K562 (cell line): ENCODE measurements at regions of chr7 and their contacts with region 1.

Region 1: GRCh38 chr7:134632937-134633540 is 13.6 kb upstream of the BPGM start:
- DNase-seq: peak; percentile 54 to 79 (median 68)
- ATAC-seq: peak; percentile 94
- H3K4me3 ChIP-seq: no peak overlapping the region
- H3K27ac ChIP-seq: no peak overlapping the region
- H3K4me1 ChIP-seq: peaks cover 0 to 6% of the 10 kb centered on the region in 2 experiments; a peak in 2 of 5 replicates
- H3K27me3 ChIP-seq: peaks cover 0 to 5% of the 10 kb centered on the region in 2 experiments; a peak in 1 of 5 replicates
- CTCF ChIP-seq: peak; percentile 84 to 97 (median 88)
- EP300 ChIP-seq: no peak
- POLR2A ChIP-seq: no peak
- RAD21 ChIP-seq: peak; percentile 95 to 98

Region 2: DNA sequence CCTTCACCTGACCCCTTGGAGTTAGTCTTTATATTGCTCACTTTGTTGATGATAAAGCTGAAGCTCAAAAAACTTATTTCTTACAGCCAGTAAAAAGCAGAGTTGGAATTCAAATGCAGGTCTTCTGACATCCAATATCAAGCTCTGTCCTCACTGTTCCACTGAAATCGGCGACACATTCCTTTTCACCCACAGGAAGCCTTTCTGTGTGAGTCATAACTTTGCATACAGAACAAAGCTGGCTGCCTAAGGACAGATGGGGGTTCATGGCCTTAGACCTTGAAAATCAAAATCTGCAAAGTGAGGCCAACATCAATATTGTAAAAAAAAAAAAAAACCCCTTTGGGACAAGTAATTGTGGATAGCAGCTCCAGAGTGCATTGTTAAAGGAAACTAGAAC is 152.3 kb before region 1 on chr7:
- CTCF ChIA-PET with region 1: no interaction called
- POLR2A ChIA-PET with region 1: no interaction called
- in situ Hi-C with region 1: no loop called
- intact Hi-C with region 1: no loop called
- DNase-seq: no peak
- ATAC-seq: no peak
- H3K4me3 ChIP-seq: no peak overlapping the region
- H3K27ac ChIP-seq: no peak overlapping the region
- H3K4me1 ChIP-seq: no peaks in the 10 kb centered on the region
- H3K27me3 ChIP-seq: no peaks in the 10 kb centered on the region
- CTCF ChIP-seq: no peak
- EP300 ChIP-seq: no peak
- POLR2A ChIP-seq: no peak
- RAD21 ChIP-seq: no peak

Region 3: DNA sequence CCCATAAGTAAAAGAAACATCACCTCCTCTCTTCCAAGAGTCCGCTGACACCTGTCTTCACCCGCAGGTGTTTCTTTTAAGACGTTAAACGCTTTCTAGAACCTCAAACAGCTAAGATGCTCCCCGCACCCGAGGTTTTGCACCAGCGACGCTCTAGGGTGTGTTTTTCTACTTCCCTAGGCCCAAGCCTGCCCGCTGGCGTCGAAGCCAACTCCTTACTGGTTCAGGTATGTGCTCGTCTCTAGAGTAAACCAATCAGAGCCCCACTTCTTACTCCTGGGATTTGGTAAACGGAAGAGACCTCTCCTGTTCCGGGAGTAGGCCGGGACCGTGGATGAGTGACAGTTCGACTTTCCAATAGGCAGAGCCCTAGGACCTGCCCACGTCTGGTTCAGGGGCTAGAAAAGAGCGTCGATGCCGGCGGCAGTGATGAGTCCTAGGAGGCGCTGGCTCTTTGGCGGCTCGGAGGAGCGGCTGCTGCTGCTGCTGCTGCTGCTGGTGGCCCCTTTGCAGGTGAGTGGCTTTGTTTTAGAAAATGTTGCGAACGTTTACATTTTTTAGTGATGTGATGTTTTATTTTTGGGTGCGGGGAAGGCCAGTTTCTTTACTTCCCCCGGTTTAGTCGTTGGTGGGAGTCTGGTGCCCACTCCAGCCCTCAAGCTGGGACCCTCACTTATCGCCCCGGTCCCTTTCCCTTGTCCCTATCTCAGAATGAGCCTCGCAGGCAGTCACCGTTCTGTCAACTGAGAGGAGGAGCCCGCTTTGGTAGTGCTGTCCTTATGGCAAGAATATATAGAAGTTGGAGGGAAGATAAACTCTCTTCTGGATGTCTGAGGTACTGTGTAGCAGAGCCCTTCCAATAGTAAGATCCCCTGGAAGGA is 13.6 kb after region 1 on chr7 and contains the start of gene BPGM:
- CTCF ChIA-PET with region 1: no interaction called
- POLR2A ChIA-PET with region 1: interaction called, 30 read pairs
- in situ Hi-C with region 1: no loop called
- intact Hi-C with region 1: no loop called
- DNase-seq: peak; percentile 99 to 100 (median 100)
- ATAC-seq: peak; percentile 99
- H3K4me3 ChIP-seq: peak within 1 kb of the TSS; percentile 62
- H3K27ac ChIP-seq: peak within 1 kb of the TSS; percentile 58
- H3K4me1 ChIP-seq: peaks cover 0 to 4% of the 10 kb centered on the region in 2 experiments; a peak in 2 of 5 replicates
- H3K27me3 ChIP-seq: no peaks in the 10 kb centered on the region
- CTCF ChIP-seq: peak; percentile 63 to 71 (median 66)
- EP300 ChIP-seq: no peak; the same call in none of the 2 replicates
- POLR2A ChIP-seq: peak; percentile 97
- RAD21 ChIP-seq: no peak
- polyA plus RNA-seq, gene BPGM: 33.0 to 46.1 TPM

Region 4: GRCh38 chr7:134701272-134701671 is 68.2 kb after region 1 on chr7:
- CTCF ChIA-PET with region 1: interaction called, 17 read pairs
- POLR2A ChIA-PET with region 1: no interaction called
- in situ Hi-C with region 1: no loop called
- intact Hi-C with region 1: loop called (anchors 1 kb)
- DNase-seq: peak; percentile 46 to 72 (median 60)
- ATAC-seq: peak; percentile 89
- H3K4me3 ChIP-seq: no peak overlapping the region
- H3K27ac ChIP-seq: no peak overlapping the region
- H3K4me1 ChIP-seq: no peaks in the 10 kb centered on the region
- H3K27me3 ChIP-seq: peaks cover 59 to 63% of the 10 kb centered on the region in 2 experiments
- CTCF ChIP-seq: peak; percentile 66 to 85 (median 79)
- EP300 ChIP-seq: no peak
- POLR2A ChIP-seq: no peak
- RAD21 ChIP-seq: peak; percentile 51 to 83

Region 5: DNA sequence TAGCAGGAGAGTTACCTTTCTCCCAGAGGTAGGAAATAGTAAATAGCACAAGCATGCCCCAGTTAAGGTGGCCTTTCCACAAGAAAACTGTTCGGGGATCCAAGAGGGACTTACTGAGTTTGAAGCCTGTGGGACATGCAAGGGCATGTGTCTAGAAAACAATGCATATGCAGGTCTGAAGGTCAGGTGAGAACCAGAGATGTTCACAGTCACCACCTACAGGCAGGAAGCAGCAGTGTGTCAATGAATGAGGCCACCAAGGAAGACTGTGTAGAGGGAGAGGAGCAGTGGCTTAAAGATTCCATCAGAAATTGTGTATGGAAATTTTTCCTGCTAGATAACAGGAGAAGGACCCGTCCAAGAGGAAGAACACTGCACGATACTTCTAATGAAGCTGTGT is 212.4 kb after region 1 on chr7:
- CTCF ChIA-PET with region 1: no interaction called
- POLR2A ChIA-PET with region 1: no interaction called
- in situ Hi-C with region 1: no loop called
- intact Hi-C with region 1: loop called (anchors 1 kb)
- DNase-seq: peak in 3 of 4 experiments; percentile 21 to 36 (median 34)
- ATAC-seq: peak; percentile 94
- H3K4me3 ChIP-seq: no peak overlapping the region
- H3K27ac ChIP-seq: no peak overlapping the region
- H3K4me1 ChIP-seq: no peaks in the 10 kb centered on the region
- H3K27me3 ChIP-seq: peaks cover 9 to 12% of the 10 kb centered on the region in 2 experiments; a peak in 3 of 5 replicates
- CTCF ChIP-seq: peak; percentile 52 to 70 (median 61)
- EP300 ChIP-seq: no peak
- POLR2A ChIP-seq: no peak
- RAD21 ChIP-seq: peak in 1 of 2 experiments; percentile 52; a peak in 2 of 4 replicates

Region 6: GRCh38 chr7:134920026-134920753 is 287.2 kb after region 1 on chr7:
- CTCF ChIA-PET with region 1: no interaction called
- POLR2A ChIA-PET with region 1: no interaction called
- in situ Hi-C with region 1: no loop called
- intact Hi-C with region 1: no loop called
- DNase-seq: no peak
- ATAC-seq: no peak
- H3K4me3 ChIP-seq: no peak overlapping the region
- H3K27ac ChIP-seq: no peak overlapping the region
- H3K4me1 ChIP-seq: no peaks in the 10 kb centered on the region; a peak in 1 of 5 replicates
- H3K27me3 ChIP-seq: no peaks in the 10 kb centered on the region
- CTCF ChIP-seq: no peak
- EP300 ChIP-seq: no peak
- POLR2A ChIP-seq: no peak
- RAD21 ChIP-seq: no peak

Region 7: DNA sequence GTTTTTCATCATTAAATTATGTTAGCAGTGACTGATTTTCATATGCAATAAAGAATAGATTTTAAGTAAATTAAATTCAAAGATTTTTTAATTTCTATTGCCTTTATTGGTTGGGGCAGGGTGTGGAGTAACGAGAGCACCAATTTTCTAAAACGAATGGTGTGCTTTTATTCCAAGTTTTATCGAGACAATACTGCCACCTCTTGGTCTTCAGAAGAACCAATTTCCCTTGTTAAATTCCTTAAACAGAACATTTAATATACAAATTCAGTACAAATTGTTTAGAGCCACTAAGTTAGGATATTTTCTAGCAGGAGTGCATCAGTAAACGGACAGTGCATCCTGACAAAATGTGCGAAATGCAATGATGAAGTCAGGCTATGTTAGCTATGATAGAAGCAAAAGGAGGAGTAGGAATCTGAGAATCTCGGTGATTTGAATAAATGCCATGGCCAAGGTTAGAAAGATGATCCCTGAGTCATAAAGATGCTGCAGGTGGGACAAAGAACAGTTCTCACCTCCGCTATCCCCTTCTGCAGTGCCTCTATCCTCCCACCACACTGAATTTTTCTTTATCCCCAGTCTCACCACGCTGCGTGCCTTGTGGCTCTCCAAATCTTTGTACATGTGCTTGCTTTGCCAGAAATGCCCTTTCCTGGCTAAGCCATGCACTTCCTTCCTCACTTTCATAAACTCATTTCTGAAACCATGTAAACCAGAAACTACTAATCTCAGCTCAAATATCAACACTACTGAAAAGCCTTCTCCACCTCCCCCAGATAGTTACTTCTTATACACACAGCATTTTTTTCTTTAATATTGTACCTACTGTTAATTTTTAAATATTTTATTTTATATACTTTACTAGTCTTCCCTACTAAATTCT is 321.4 kb after region 1 on chr7:
- CTCF ChIA-PET with region 1: interaction called, 35 read pairs
- POLR2A ChIA-PET with region 1: no interaction called
- in situ Hi-C with region 1: loop called (anchors 5 kb)
- intact Hi-C with region 1: loop called (anchors 1 kb)
- DNase-seq: peak; percentile 35 to 50 (median 44)
- ATAC-seq: peak; percentile 80
- H3K4me3 ChIP-seq: no peak overlapping the region
- H3K27ac ChIP-seq: no peak overlapping the region
- H3K4me1 ChIP-seq: no peaks in the 10 kb centered on the region
- H3K27me3 ChIP-seq: peaks cover 0 to 15% of the 10 kb centered on the region in 2 experiments; a peak in 2 of 5 replicates
- CTCF ChIP-seq: peak; percentile 50 to 82 (median 64); a peak in 4 of 6 replicates
- EP300 ChIP-seq: no peak
- POLR2A ChIP-seq: no peak
- RAD21 ChIP-seq: peak; percentile 83 to 88